IMR-90 (cell line): ENCODE measurements at regions of chr6 and their contacts with region 1.

Region 1: DNA sequence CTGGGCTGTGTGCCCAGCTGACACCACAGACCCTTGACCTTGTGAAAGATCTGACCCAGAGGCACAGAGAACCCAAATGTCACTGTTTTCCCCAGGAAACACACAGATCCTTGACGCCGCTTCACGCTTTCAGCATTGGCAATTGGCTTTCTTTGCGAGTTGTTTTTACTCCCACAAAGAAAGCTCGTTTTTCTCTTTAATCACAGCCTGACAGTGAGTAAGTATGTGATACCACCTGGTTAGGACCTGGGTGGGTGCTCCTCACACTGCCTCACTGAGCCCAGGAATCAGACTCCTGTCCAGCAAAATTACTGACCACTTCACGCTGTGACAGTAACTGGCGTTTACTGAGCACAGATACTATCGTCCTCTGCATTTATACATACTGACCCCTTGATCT is 13.0 kb downstream of the RPL10A start:
- DNase-seq: no peak
- ATAC-seq: no peak
- H3K4me3 ChIP-seq: no peak overlapping the region
- H3K27ac ChIP-seq: no peak overlapping the region
- H3K4me1 ChIP-seq: peaks cover 17% of the 10 kb centered on the region
- H3K27me3 ChIP-seq: no peaks in the 10 kb centered on the region
- CTCF ChIP-seq: no peak
- POLR2A ChIP-seq: no peak
- RAD21 ChIP-seq: no peak

Region 2: GRCh38 chr6:34521463-34522285 is 959.6 kb before region 1 on chr6:
- CTCF ChIA-PET with region 1: no interaction called
- POLR2A ChIA-PET with region 1: no interaction called
- dilution Hi-C with region 1: no loop called
- in situ Hi-C with region 1: no loop called
- intact Hi-C with region 1: no loop called
- DNase-seq: no peak
- ATAC-seq: no peak
- H3K4me3 ChIP-seq: no peak overlapping the region
- H3K27ac ChIP-seq: no peak overlapping the region
- H3K4me1 ChIP-seq: peaks cover 2% of the 10 kb centered on the region
- H3K27me3 ChIP-seq: peaks cover 29% of the 10 kb centered on the region
- CTCF ChIP-seq: no peak
- POLR2A ChIP-seq: no peak
- RAD21 ChIP-seq: no peak

Region 3: GRCh38 chr6:35297601-35298481 is 183.4 kb before region 1 on chr6 and contains the start of gene DEF6:
- CTCF ChIA-PET with region 1: no interaction called
- POLR2A ChIA-PET with region 1: no interaction called
- dilution Hi-C with region 1: no loop called
- in situ Hi-C with region 1: no loop called
- intact Hi-C with region 1: no loop called
- DNase-seq: peak; percentile 82
- ATAC-seq: peak; percentile 94
- H3K4me3 ChIP-seq: peak within 1 kb of the TSS; percentile 15; the same call in 1 of the 2 replicates
- H3K27ac ChIP-seq: no peak within 1 kb of the TSS
- H3K4me1 ChIP-seq: peaks cover 4% of the 10 kb centered on the region; the same call in 1 of the 2 replicates
- H3K27me3 ChIP-seq: no peaks in the 10 kb centered on the region
- CTCF ChIP-seq: peak; percentile 75
- POLR2A ChIP-seq: no peak
- RAD21 ChIP-seq: peak; percentile 87
- total RNA-seq, gene DEF6: 1.9 and 2.5 TPM in 2 replicates

Region 4: GRCh38 chr6:35351410-35351809 is 129.8 kb before region 1 on chr6:
- CTCF ChIA-PET with region 1: no interaction called
- POLR2A ChIA-PET with region 1: interaction called, 17 read pairs
- dilution Hi-C with region 1: no loop called
- in situ Hi-C with region 1: no loop called
- intact Hi-C with region 1: no loop called
- DNase-seq: no peak
- ATAC-seq: no peak
- H3K4me3 ChIP-seq: no peak overlapping the region
- H3K27ac ChIP-seq: no peak overlapping the region
- H3K4me1 ChIP-seq: peaks cover 6% of the 10 kb centered on the region
- H3K27me3 ChIP-seq: no peaks in the 10 kb centered on the region
- CTCF ChIP-seq: no peak
- POLR2A ChIP-seq: no peak
- RAD21 ChIP-seq: no peak